GM10248 (cell line): ENCODE measurements at regions of chr11 and their contacts with region 1.

Region 1: DNA sequence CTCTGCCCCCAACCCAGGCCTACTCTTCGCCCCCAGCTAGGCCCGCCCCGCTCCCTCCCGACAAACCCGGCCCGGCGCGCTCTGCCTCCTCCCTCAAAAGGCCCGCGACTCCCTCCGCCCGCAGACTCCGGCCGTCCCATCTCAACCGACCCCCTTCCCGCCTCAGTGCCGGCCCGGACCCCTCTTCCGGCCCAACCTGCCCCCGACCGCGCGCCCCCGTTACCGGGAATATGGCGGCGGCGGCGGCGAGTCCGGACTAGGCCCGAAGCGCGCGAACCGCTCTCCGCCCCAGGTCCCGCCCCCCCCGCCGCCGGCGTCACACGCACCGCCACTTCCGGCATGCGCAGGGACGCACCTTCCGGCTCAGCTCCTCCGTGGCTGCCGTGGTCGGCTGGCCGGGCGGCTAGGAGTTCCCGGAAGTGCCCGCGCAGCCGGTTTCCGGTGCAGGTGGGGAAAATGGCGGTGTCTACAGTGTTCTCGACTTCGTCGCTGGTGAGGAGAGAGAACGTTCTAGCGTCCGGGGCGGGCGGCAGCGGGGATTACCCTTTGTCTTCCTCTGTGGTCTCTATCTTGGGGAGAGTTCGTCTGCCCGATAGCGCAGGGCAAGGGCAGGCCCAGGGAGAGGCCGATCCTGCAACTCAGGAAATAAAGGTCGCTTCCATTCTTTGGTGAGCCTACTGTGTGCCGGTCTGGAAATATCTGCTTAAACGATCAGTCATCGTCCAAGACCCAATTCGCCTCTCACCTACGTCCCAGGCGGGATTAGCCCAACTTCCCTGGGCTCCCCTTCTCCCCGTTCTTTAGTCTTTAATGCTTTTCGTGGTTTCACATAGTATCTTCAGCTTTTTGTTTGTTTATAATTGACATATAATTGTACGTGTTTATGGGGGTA is at the starts of genes CPSF7 and SDHAF2:
- DNase-seq: peak; percentile 97
- CTCF ChIP-seq: no peak

Region 2: GRCh38 chr11:61281581-61282250 is 148.2 kb before region 1 on chr11:
- CTCF ChIA-PET with region 1: no interaction called
- POLR2A ChIA-PET with region 1: no interaction called
- DNase-seq: peak; percentile 55
- CTCF ChIP-seq: no peak

Region 3: DNA sequence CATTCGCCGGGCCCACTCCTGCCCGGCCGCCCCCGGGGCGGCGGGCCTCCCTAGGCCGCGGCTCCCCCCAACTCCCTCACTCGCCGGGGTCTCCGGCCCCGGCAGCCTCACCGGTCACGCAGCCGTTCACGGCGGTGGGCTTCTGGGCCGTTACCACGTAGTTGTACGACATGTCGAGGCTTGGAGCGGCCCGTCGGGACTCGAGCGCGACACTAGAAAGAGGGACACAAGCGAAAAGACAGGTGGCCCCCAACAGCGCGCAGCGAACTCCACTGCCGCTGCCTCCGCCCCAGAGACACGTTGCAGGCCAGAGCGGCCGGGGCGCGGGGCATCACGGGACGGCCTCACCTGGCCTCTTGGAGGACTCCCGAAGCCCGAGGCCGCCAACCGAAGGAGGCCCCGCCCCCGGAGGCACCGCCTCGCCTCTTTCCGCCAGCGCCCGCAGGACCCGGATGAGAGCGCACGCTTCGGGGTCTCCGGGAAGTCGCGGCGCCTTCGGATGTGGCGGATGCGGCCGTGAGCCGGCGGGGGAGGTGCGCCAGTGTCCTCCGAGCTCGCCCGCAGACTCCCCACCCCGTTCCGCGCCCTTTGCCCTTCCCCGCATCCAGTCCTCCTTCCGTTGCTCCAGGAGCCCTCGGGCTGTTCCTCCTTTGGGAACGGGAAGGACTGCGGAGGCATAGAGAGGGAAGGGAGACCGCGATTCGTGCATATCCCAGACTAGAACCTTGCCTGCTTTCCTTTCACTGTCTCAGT is 97.0 kb before region 1 on chr11 and contains the starts of genes DDB1 and TKFC:
- CTCF ChIA-PET with region 1: interaction called, 22 read pairs
- POLR2A ChIA-PET with region 1: no interaction called
- DNase-seq: peak; percentile 99
- CTCF ChIP-seq: no peak

Region 4: DNA sequence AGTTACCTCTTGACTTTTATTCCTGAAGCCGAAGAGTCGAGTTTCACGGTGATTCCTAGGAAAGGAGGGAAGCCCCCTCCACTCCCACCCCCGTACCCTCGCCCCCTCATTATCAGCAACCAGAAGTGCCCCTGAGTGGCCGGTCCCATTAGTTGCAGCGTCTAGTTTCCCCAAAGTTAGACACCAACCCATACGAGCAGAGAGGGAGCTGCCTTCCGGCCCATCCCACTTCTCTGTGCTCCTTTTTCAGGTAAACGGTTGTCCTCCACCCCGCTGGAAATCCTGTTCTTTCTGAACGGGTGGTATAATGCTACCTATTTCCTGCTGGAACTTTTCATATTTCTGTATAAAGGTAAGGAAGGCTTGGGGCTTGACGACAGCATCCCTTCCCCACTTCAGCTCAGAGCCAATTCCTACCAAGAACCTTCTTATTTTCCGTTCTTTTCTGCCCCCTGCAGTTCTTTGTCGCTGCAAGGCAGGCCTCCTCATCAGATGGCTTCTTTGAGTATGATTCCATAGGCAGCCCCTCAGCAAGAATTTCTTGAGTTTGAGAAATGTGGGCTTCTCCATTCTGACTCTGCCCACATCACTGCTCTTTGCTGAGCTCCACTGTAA is 36.8 kb before region 1 on chr11:
- CTCF ChIA-PET with region 1: interaction called, 11 read pairs
- POLR2A ChIA-PET with region 1: interaction called, 7 read pairs
- DNase-seq: peak; percentile 45
- CTCF ChIP-seq: peak; percentile 38

Region 5: DNA sequence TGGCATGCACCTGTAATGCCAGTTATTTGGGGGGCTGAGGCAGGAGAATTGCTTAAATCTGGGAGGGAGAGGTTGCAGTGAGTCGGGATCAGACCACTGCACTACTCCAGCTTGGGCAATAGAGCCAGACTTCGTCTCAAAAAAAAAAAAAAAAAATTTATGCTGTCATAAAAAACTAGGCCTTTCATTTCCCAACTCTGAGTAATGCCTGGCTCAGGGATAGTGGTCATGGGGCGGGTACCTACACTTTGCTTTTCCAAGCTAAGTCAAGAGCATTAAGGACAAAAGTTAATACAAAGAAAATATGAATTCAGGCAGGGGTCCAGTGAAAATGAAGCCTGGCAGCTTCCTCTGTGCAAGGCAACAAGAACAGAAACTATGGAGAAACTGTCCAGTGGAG is 16.4 kb before region 1 on chr11:
- CTCF ChIA-PET with region 1: no interaction called
- POLR2A ChIA-PET with region 1: no interaction called
- DNase-seq: no peak
- CTCF ChIP-seq: no peak

Region 6: GRCh38 chr11:61453695-61454094 is 23.8 kb after region 1 on chr11:
- CTCF ChIA-PET with region 1: interaction called, 126 read pairs
- POLR2A ChIA-PET with region 1: no interaction called
- DNase-seq: no peak
- CTCF ChIP-seq: no peak

Region 7: DNA sequence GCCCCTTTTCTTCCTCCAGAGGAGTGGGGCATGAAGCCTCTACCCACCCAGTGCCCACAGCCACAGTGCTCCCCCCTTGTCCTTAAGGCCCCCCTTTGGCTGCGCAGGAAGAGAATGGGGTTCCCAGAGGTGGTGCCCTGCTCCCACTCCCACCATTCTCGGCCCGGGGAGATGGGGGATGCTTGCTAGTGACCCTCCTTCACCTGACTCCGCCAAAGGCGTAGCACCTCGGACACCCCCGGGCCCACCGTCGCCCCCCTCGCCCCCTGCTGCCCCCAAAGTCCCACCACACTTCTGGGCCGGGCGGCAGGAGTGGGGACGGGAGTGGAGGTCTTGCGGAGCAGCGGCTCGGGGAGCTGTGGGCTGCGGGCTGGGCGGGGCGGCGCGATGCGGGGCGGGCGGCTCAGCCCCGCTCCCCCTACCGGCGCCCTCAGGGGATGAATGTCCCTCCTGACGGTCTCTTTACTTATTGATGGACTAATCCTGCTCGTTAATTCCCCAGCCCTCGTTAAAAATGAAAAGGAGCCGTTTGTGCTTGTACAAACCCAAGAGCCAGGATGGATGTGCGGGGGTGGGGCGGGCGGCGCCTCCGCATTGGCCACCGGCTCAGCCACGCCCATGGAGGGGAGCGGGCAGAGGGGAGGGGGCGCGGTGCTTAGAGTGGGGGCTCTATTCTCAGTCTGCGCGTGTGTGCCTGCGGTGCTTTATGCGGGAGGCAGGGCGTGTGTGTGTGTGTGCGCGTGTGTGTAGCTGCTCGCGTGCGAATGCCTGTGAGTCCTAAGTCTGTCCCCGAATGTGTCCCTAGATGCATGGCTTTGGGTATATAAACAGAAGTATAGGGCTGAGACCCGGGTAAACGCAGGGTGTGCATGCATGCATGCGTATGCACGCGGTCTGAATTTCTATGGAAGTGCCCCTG is 125.4 kb after region 1 on chr11:
- CTCF ChIA-PET with region 1: no interaction called
- POLR2A ChIA-PET with region 1: no interaction called
- DNase-seq: no peak
- CTCF ChIP-seq: no peak

Region 8: DNA sequence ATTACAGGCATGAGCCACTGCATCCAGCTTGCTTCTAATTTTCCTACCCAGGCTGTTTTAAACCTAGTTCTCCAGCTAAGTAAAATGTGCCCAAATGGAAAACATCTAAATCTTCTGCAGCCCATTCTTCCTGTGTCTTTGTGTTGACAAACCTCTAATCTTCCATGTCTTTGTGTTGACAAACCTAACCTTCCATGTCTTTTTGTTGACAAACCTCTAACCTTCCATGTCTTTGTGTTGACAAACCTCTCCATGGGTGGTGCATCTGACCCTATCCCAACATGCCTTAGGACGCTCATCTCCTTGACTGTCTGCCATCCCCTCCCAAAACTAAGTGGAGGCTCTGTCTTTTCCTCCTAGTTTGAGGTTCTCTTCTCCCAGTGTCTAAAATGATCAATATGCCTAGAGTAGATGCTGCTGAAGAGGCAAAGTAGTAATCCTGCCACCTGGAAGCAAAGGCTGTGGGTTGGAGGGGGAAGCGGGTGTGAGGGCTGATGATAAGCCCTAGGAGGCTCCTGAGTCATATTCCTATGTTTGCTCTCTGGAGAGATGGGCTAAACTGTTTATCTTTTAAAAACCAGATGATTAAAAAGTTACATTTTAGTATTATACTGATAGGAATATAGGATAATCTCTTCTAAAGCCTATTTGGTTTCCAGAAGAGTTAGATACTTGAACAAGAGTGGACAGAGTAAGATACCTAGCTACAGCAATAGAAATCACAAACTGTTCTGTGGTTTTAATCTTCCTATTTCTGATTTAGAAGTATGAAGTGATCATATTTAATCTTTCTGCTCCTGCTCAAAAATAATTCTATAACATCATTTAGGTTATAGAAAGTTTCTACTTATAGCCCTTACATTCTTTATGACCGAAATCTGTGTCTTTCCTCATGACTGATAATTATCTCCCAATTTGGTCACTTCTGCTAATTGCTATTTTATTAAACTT is 370.7 kb after region 1 on chr11:
- CTCF ChIA-PET with region 1: no interaction called
- POLR2A ChIA-PET with region 1: interaction called, 10 read pairs
- DNase-seq: no peak
- CTCF ChIP-seq: no peak